HepG2 (cell line): ENCODE measurements at regions of chr1 and their contacts with region 1.

Region 1: GRCh38 chr1:75632350-75632949 is 21.5 kb upstream of the SLC44A5 start:
- DNase-seq: peak; percentile 28
- ATAC-seq: peak; percentile 83
- H3K4me3 ChIP-seq: no peak overlapping the region
- H3K27ac ChIP-seq: no peak overlapping the region
- H3K4me1 ChIP-seq: peaks cover 21% of the 10 kb centered on the region
- H3K27me3 ChIP-seq: no peaks in the 10 kb centered on the region
- CTCF ChIP-seq: peak; percentile 72
- EP300 ChIP-seq: no peak
- POLR2A ChIP-seq: no peak
- RAD21 ChIP-seq: peak; percentile 44; the same call in 1 of the 2 replicates

Region 2: GRCh38 chr1:75233302-75233929 is 399.0 kb before region 1 on chr1:
- CTCF ChIA-PET with region 1: interaction called, 4 read pairs
- POLR2A ChIA-PET with region 1: no interaction called
- in situ Hi-C with region 1: loop called (anchors 25 kb)
- intact Hi-C with region 1: loop called (anchors 1 kb)
- DNase-seq: peak; percentile 38
- ATAC-seq: peak; percentile 91
- H3K4me3 ChIP-seq: no peak overlapping the region
- H3K27ac ChIP-seq: no peak overlapping the region
- H3K4me1 ChIP-seq: no peaks in the 10 kb centered on the region
- H3K27me3 ChIP-seq: no peaks in the 10 kb centered on the region
- CTCF ChIP-seq: peak; percentile 72
- EP300 ChIP-seq: no peak
- POLR2A ChIP-seq: no peak
- RAD21 ChIP-seq: 0 out of 2 replicates have a peak, but pooled peaks have one; percentile 29

Region 3: GRCh38 chr1:75265792-75266191 is 366.7 kb before region 1 on chr1:
- CTCF ChIA-PET with region 1: interaction called, 15 read pairs
- POLR2A ChIA-PET with region 1: no interaction called
- in situ Hi-C with region 1: no loop called
- intact Hi-C with region 1: loop called (anchors 1 kb)
- DNase-seq: peak; percentile 67
- ATAC-seq: peak; percentile 84
- H3K4me3 ChIP-seq: no peak overlapping the region
- H3K27ac ChIP-seq: no peak overlapping the region
- H3K4me1 ChIP-seq: peaks cover 31% of the 10 kb centered on the region
- H3K27me3 ChIP-seq: no peaks in the 10 kb centered on the region
- CTCF ChIP-seq: peak; percentile 71
- EP300 ChIP-seq: no peak; a peak in 1 of 4 replicates
- POLR2A ChIP-seq: no peak
- RAD21 ChIP-seq: peak; percentile 32; the same call in 1 of the 2 replicates